ENCODE measurements at regions of chr6 and their contacts with region 1.

Region 1: DNA sequence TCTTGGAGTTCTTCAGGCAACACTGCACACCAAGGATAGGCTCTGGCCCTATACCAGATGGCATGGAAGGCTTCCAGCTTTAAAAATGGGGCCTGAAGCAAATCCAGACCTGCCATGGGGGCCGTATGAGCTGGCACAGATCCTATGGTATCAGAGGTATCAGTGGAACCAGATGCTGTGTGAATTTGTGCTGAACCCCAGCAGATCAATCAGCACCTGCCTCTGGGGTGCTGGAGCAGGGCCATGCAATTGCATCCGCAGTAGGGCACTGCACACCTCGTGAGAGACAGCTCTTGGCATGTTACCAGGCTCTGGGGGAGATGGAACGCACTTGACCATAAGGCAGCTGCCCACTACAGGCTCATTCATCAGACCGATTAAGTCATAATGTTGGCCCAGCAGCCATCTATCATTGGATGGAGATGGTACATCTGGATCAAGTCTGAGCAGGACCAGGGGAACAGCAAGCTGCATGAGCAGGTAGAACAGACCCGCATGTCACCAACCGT is 221.5 kb downstream of the MYLK4 start:
- DNase-seq: no peak
- H3K4me3 ChIP-seq: no peak overlapping the region
- CTCF ChIP-seq: no peak

Region 2: GRCh38 chr6:2468601-2468955 is 60.7 kb before region 1 on chr6:
- in situ Hi-C with region 1: loop called (anchors 5 kb)
- DNase-seq: no peak
- H3K4me3 ChIP-seq: no peak overlapping the region
- CTCF ChIP-seq: no peak